ENCODE measurements at regions of chr6 and their contacts with region 1.

Region 1: DNA sequence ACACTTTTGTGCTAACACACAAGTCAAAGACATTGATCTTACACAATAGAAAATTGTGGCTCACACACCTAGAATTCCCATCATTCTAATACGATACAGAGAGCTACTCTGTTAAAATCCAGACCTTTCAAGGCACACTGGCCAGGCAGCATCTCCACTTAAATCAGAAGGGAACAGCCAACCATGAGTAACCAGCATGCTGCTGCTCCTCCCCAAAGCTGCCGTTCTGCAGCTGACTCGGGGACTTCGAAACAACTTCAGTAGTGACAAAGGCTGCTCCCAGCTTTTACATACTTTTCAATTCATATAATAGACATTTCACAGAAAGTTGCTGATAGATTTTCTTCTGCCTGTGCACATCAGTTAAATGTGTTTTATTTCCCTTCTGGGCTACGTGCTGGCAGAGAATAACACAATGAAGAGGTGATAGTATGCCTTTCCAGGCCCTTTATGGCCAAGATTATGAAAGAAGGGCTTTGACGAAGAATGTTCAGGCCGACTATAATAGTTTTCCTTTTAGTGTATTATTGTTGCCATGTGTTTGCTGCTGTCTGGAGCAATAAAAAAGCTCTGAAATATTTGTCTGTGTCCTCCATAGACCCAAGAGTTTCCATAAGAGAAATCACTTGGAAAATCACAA is 159.0 kb downstream of the GMDS start:
- DNase-seq: no peak
- ATAC-seq: no peak
- H3K4me3 ChIP-seq: no peak overlapping the region
- H3K27ac ChIP-seq: no peak overlapping the region
- H3K4me1 ChIP-seq: no peaks in the 10 kb centered on the region
- H3K27me3 ChIP-seq: no peaks in the 10 kb centered on the region
- CTCF ChIP-seq: no peak
- POLR2A ChIP-seq: no peak
- RAD21 ChIP-seq: no peak

Region 2: DNA sequence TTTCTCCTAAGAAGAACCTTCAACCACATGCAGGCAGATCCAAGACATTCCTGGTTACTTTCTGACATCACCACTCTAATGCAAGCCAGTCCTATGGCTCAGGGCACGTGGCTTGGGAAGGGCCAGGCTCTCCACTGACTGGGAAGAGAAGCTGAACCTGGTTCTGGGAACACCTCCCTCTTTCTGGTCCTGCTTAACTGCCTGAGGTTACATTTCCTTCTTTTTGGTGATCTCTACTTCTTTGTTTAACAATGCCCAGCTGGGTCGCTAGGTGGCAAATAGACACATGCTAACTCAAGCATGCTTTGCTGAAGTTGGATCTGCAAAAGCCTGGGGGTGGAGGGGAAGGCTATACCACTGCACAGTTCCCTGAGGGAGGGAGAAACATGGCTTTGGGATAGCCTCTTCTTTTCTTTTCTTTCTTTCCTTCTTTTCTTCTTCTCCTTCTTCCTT is 90.8 kb before region 1 on chr6:
- CTCF ChIA-PET with region 1: no interaction called
- POLR2A ChIA-PET with region 1: no interaction called
- dilution Hi-C with region 1: no loop called
- in situ Hi-C with region 1: no loop called
- intact Hi-C with region 1: no loop called
- DNase-seq: peak; percentile 66
- ATAC-seq: peak; percentile 28; the same call in 1 of the 2 replicates
- H3K4me3 ChIP-seq: no peak overlapping the region
- H3K27ac ChIP-seq: no peak overlapping the region
- H3K4me1 ChIP-seq: peaks cover 5% of the 10 kb centered on the region
- H3K27me3 ChIP-seq: no peaks in the 10 kb centered on the region
- CTCF ChIP-seq: no peak
- POLR2A ChIP-seq: no peak
- RAD21 ChIP-seq: no peak

Region 3: GRCh38 chr6:2021713-2022125 is 64.7 kb before region 1 on chr6:
- CTCF ChIA-PET with region 1: no interaction called
- POLR2A ChIA-PET with region 1: no interaction called
- dilution Hi-C with region 1: no loop called
- in situ Hi-C with region 1: no loop called
- intact Hi-C with region 1: loop called (anchors 5 kb)
- DNase-seq: peak; percentile 77
- ATAC-seq: peak; percentile 87
- H3K4me3 ChIP-seq: no peak overlapping the region
- H3K27ac ChIP-seq: no peak overlapping the region
- H3K4me1 ChIP-seq: no peaks in the 10 kb centered on the region
- H3K27me3 ChIP-seq: no peaks in the 10 kb centered on the region
- CTCF ChIP-seq: no peak
- POLR2A ChIP-seq: no peak
- RAD21 ChIP-seq: no peak